ENCODE measurements at regions of chr3 and their contacts with region 1.

Region 1: GRCh38 chr3:51941798-51942602 is at the starts of genes PARP3 and RRP9:
- DNase-seq: peak; percentile 100
- ATAC-seq: peak; percentile 95
- H3K4me3 Mint-ChIP-seq: peak within 1 kb of the TSS; percentile 84
- H3K27ac Mint-ChIP-seq: peak within 1 kb of the TSS; percentile 83
- H3K4me1 Mint-ChIP-seq: peaks cover 33% of the 10 kb centered on the region
- H3K27me3 Mint-ChIP-seq: no peaks in the 10 kb centered on the region
- total RNA-seq, gene PARP3: 10.6 to 12.2 TPM
- total RNA-seq, gene RRP9: 38.2 to 39.3 TPM

Region 2: DNA sequence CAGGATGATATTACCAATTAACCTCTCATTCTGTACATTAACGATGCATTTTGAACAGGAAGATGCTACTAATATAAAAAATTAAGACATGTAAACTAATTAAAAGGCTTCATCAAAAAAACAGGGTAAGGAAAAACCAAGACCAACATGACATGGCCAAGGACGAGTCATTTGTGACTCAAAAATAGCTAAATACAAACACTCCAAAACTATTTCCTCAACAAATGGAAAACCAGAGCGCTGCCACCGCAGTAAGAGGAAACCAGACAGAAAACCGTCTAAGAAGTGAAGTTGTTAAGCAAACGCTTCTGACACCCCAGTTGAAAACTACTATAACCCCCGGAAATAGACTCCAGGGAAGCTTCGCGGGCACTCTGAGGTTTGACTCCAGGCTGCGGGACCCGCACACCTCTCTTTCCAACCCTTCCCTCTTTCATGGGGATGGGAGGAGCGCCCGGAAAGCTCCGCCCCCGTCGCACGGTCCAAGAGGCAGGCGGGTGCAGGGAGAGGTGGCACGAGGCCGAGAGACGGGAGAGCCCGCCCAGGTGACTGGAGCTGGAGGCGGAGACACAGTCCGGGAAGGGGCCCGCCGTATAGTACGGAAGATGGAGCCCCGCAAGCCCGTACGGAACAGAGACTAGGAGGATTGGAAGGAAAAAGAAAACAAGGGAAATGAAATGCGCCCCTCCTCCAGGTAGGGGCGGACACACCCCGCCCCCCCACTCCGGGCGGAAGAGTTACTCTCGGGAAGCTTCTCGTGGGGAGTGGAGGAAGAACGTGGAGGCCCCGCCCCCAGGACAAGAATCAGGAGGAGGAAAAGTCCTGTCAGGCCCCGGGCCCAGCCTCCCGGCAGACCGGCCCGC is 442.9 kb before region 1 on chr3:
- CTCF ChIA-PET with region 1: no interaction called
- POLR2A ChIA-PET with region 1: no interaction called
- intact Hi-C with region 1: loop called in 1 of 2 experiments (anchors 1 kb)
- DNase-seq: peak; percentile 94
- ATAC-seq: peak; percentile 75
- H3K4me3 Mint-ChIP-seq: peak overlapping the region; percentile 88
- H3K27ac Mint-ChIP-seq: peak overlapping the region; percentile 97
- H3K4me1 Mint-ChIP-seq: peaks cover 16% of the 10 kb centered on the region
- H3K27me3 Mint-ChIP-seq: no peaks in the 10 kb centered on the region

Region 3: DNA sequence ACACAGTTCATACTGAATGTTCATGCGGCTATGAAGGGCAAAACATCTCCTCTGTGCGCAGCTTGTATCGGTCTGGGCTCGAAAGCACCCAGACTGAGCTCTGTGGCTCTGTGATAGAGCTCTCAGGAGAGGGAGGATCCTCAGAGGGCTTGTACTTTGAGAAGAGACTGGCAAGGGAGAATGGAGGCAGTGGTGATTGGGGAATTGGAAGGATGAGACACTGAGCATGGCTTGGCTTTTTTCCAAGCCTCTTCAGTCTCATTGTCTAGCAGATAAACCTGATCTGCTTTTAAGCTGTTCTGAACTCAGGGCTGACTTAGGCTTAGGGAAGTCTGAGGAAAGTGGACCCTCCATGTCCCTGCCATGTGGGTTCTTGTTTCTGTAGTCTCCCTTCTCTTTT is 360.5 kb before region 1 on chr3:
- CTCF ChIA-PET with region 1: no interaction called
- POLR2A ChIA-PET with region 1: no interaction called
- intact Hi-C with region 1: no loop called
- DNase-seq: no peak
- ATAC-seq: no peak
- H3K4me3 Mint-ChIP-seq: no peak overlapping the region
- H3K27ac Mint-ChIP-seq: no peak overlapping the region
- H3K4me1 Mint-ChIP-seq: peaks cover 8% of the 10 kb centered on the region
- H3K27me3 Mint-ChIP-seq: no peaks in the 10 kb centered on the region

Region 4: DNA sequence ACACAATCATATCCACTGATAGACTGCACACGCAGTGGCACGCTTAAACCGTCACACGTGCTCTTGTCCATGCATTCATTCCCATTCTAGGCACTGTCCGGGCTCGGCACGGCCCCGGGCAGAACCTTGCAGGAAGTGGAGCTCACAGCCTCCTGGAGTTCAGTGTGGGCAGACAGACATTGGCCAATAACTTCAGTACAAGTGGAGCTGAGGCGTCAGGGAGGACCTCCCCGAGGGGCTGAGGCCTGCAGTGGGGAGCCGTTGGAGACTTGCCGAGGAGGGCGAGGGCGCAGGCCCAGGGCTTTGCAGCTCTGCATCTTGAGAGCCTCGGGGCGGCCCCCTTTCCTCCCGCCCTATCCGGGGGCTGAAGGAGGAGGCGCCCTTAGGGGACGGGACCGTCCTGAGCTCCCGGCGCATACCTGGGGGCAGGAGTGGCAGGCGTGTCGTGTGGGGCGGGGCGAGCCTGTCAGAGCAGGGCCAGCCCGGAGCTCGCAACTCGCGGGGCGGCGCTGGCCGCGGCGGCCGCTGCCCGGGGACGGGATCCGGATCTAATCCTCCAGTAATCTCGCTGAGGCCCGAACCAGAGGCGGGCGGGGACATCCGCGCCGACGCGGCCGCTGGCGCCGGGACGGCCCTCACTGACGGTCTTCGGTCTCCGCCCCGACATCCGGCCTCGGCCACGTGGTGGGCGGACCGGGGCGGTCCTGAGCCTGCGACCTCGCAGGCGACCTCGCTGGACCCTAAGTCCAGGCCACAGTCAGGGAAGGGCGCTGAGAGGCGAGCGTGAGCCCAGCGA is 41.0 kb after region 1 on chr3 and contains the start of gene ACY1:
- CTCF ChIA-PET with region 1: interaction called, 20 read pairs
- POLR2A ChIA-PET with region 1: interaction called, 4 read pairs
- intact Hi-C with region 1: loop called (anchors 1 kb)
- DNase-seq: peak; percentile 90
- ATAC-seq: peak; percentile 88
- H3K4me3 Mint-ChIP-seq: peak within 1 kb of the TSS; percentile 96
- H3K27ac Mint-ChIP-seq: peak within 1 kb of the TSS; percentile 96
- H3K4me1 Mint-ChIP-seq: peaks cover 20% of the 10 kb centered on the region
- H3K27me3 Mint-ChIP-seq: no peaks in the 10 kb centered on the region
- total RNA-seq, gene ACY1: 61.5 to 90.0 TPM

Region 5: DNA sequence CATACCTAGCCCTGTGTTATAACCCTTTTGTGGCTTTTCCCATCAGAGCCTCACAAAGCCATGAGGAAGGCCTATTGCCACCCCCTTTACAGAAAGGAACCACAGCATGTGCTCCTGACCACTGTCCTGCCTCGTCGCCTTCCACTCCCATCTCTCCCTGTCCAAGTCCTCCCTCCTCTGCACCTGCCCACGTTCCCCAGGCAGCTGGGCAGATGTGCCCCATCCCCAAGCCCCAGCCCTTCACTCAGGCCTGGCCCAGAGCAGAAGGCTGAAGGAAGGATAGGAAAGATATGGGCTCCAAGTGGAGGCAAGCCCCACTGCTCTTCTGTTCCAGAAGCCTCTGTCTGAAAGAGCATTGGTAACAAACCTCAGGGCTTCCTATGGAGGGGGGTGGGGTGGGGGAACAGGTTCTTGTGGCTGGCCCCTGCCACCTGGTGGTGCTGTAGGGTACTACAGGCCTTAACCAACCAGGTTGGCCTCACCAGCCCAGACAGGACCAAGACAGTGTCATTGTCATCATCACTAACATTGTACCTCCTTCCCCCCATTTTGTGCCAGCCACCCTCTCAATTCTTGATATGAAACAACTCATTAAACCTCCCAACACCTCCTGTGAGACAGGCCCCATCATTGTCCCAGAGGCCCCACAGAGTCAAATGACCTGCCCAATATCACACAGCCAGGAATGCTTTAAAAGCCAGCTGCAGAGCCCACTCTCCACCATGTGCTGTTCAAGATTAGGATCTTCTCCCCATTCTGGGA is 202.2 kb after region 1 on chr3:
- CTCF ChIA-PET with region 1: interaction called, 5 read pairs
- POLR2A ChIA-PET with region 1: no interaction called
- intact Hi-C with region 1: loop called (anchors 1 kb)
- DNase-seq: peak; percentile 91
- ATAC-seq: peak; percentile 96
- H3K4me3 Mint-ChIP-seq: no peak overlapping the region
- H3K27ac Mint-ChIP-seq: no peak overlapping the region
- H3K4me1 Mint-ChIP-seq: peaks cover 7% of the 10 kb centered on the region
- H3K27me3 Mint-ChIP-seq: no peaks in the 10 kb centered on the region

Region 6: GRCh38 chr3:52278510-52279069 is 336.6 kb after region 1 on chr3 and contains the start of gene WDR82:
- CTCF ChIA-PET with region 1: no interaction called
- POLR2A ChIA-PET with region 1: interaction called, 5 read pairs
- intact Hi-C with region 1: loop called in 1 of 2 experiments (anchors 2 kb)
- DNase-seq: peak; percentile 100
- ATAC-seq: peak; percentile 78
- H3K4me3 Mint-ChIP-seq: peak within 1 kb of the TSS; percentile 99
- H3K27ac Mint-ChIP-seq: peak within 1 kb of the TSS; percentile 99
- H3K4me1 Mint-ChIP-seq: peaks cover 56% of the 10 kb centered on the region
- H3K27me3 Mint-ChIP-seq: no peaks in the 10 kb centered on the region
- total RNA-seq, gene WDR82: 95.2 to 113 TPM

Region 7: GRCh38 chr3:52685709-52686691 is 744.0 kb after region 1 on chr3 and contains the starts of genes GNL3 and PBRM1:
- CTCF ChIA-PET with region 1: no interaction called
- POLR2A ChIA-PET with region 1: no interaction called
- intact Hi-C with region 1: loop called in 1 of 2 experiments (anchors 2 kb)
- DNase-seq: peak; percentile 97
- ATAC-seq: peak; percentile 70
- H3K4me3 Mint-ChIP-seq: peak within 1 kb of the TSS; percentile 99
- H3K27ac Mint-ChIP-seq: peak within 1 kb of the TSS; percentile 99
- H3K4me1 Mint-ChIP-seq: peaks cover 75% of the 10 kb centered on the region
- H3K27me3 Mint-ChIP-seq: no peaks in the 10 kb centered on the region
- total RNA-seq, gene GNL3: 206 to 218 TPM
- total RNA-seq, gene PBRM1: 57.6 to 59.8 TPM